ENCODE measurements at regions of chr2 and their contacts with region 1.

Region 1: DNA sequence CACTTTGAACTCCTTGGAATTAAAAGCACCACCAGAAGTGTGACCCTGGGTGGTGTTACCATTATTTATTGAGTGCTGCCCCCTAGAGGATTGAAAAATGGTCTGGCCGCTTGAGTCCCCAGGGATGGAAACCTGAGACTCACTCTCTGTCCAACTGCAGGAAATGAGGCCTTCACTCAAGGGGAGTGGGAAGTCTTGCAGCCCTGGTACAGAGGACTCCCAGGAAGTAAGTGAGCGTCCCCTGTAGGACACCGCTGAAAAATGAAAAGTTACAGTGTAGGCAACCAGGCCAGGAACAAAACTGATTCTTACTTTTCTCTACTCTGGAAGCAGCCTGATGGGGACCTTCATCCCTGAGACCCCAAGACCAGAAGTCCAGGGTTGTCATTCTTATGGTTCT is 2.2 kb upstream of the NRP2 start:
- DNase-seq: peak; percentile 79
- H3K4me3 ChIP-seq: no peak overlapping the region
- H3K27ac ChIP-seq: no peak overlapping the region
- H3K4me1 ChIP-seq: peaks cover 27% of the 10 kb centered on the region
- H3K27me3 ChIP-seq: no peaks in the 10 kb centered on the region
- CTCF ChIP-seq: peak; percentile 67 to 72
- POLR2A ChIP-seq: no peak

Region 2: GRCh38 chr2:204114295-204115145 is 1565.5 kb before region 1 on chr2:
- CTCF ChIA-PET with region 1: interaction called, 17 read pairs
- POLR2A ChIA-PET with region 1: interaction called, 11 read pairs
- dilution Hi-C with region 1: no loop called
- intact Hi-C with region 1: loop called (anchors 1 kb)
- DNase-seq: peak; percentile 99
- H3K4me3 ChIP-seq: peak overlapping the region in 1 of 3 experiments; percentile 11
- H3K27ac ChIP-seq: peak overlapping the region; percentile 86
- H3K4me1 ChIP-seq: peaks cover 77% of the 10 kb centered on the region
- H3K27me3 ChIP-seq: no peaks in the 10 kb centered on the region
- CTCF ChIP-seq: no peak
- POLR2A ChIP-seq: peak; percentile 73

Region 3: DNA sequence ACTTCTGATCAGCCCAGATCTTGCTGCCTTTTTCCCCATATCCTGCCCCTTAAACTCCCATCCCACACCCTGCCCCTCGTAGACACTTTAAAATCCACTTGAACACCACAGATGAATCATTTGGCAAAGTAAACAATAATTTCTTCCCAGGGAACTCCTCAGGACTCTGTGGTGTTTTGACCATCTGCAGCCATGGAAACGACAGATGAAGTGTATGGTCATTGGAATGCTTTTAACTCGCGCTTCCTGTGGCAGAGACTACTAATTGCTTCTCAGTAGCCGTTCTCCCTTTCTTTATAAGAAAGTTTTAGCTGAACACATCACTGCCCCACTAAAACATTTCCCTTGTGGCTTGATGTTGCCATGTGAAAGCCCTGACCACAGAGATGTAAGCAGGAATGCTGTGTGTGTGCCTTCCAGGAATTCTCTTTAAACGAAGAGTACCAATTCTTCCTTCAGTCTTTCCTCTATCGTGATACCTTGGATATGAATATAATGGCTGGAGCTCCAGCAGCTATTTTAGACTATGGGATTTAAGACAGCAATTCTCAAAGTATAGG is 1227.5 kb before region 1 on chr2:
- CTCF ChIA-PET with region 1: no interaction called
- POLR2A ChIA-PET with region 1: no interaction called
- dilution Hi-C with region 1: no loop called
- intact Hi-C with region 1: loop called (anchors 2 kb)
- DNase-seq: peak; percentile 99
- H3K4me3 ChIP-seq: no peak overlapping the region
- H3K27ac ChIP-seq: peak overlapping the region; percentile 92
- H3K4me1 ChIP-seq: peaks cover 24% of the 10 kb centered on the region
- H3K27me3 ChIP-seq: no peaks in the 10 kb centered on the region
- CTCF ChIP-seq: no peak
- POLR2A ChIP-seq: no peak

Region 4: DNA sequence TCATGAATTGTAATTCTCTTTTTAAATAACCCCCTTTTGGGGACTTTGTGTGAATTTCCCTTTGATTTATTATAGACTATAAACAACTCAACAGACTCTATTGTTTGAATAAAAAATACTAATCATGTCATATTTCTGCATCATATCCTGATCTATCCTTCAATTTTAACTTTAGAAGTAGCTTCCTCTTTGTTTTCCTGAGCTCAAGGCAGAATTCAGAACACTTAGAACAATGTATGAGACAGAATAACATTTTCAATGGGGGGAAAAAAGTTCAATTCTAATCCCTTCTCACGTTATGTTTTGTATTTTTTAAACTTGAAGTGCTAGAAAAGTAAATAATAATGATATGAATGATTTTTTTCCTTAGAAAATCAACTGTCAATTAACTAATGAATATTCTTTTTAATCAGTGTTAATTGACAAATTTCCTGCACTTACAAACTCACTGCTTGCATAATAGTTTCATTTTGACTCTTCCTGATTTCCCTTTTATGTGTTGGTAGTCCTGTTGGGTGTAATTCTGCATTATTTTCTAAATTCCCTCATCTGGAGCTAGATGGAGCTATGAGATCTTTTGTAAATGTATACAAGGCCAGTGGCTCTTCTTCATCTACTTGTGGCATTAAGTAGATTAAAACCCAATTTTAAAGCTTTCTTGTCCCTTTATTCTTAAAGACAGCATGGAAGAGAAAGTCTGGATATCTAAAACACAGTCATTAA is 808.7 kb before region 1 on chr2:
- CTCF ChIA-PET with region 1: interaction called, 62 read pairs
- POLR2A ChIA-PET with region 1: no interaction called
- dilution Hi-C with region 1: no loop called
- intact Hi-C with region 1: loop called (anchors 1 kb)
- DNase-seq: peak; percentile 87
- H3K4me3 ChIP-seq: no peak overlapping the region
- H3K27ac ChIP-seq: peak overlapping the region; percentile 42
- H3K4me1 ChIP-seq: peaks cover 14% of the 10 kb centered on the region
- H3K27me3 ChIP-seq: no peaks in the 10 kb centered on the region
- CTCF ChIP-seq: peak in 1 of 2 donors; percentile 20
- POLR2A ChIP-seq: no peak

Region 5: GRCh38 chr2:205405752-205406151 is 274.3 kb before region 1 on chr2:
- CTCF ChIA-PET with region 1: interaction called, 11 read pairs
- POLR2A ChIA-PET with region 1: interaction called, 3 read pairs
- dilution Hi-C with region 1: no loop called
- intact Hi-C with region 1: no loop called
- DNase-seq: peak; percentile 87
- H3K4me3 ChIP-seq: no peak overlapping the region
- H3K27ac ChIP-seq: peak overlapping the region; percentile 54
- H3K4me1 ChIP-seq: peaks cover 26% of the 10 kb centered on the region
- H3K27me3 ChIP-seq: no peaks in the 10 kb centered on the region
- CTCF ChIP-seq: no peak
- POLR2A ChIP-seq: no peak

Region 6: GRCh38 chr2:205766779-205767359 is 86.8 kb after region 1 on chr2:
- CTCF ChIA-PET with region 1: interaction called, 4 read pairs
- POLR2A ChIA-PET with region 1: interaction called, 3 read pairs
- dilution Hi-C with region 1: no loop called
- intact Hi-C with region 1: loop called (anchors 2 kb)
- DNase-seq: peak; percentile 66
- H3K4me3 ChIP-seq: no peak overlapping the region
- H3K27ac ChIP-seq: no peak overlapping the region
- H3K4me1 ChIP-seq: peaks cover 28% of the 10 kb centered on the region
- H3K27me3 ChIP-seq: no peaks in the 10 kb centered on the region
- CTCF ChIP-seq: peak; percentile 79 to 86
- POLR2A ChIP-seq: no peak

Region 7: GRCh38 chr2:206064077-206064476 is 384.0 kb after region 1 on chr2:
- CTCF ChIA-PET with region 1: no interaction called
- POLR2A ChIA-PET with region 1: no interaction called
- dilution Hi-C with region 1: no loop called
- intact Hi-C with region 1: no loop called
- DNase-seq: no peak
- H3K4me3 ChIP-seq: no peak overlapping the region
- H3K27ac ChIP-seq: no peak overlapping the region
- H3K4me1 ChIP-seq: no peaks in the 10 kb centered on the region
- H3K27me3 ChIP-seq: no peaks in the 10 kb centered on the region
- CTCF ChIP-seq: no peak
- POLR2A ChIP-seq: no peak

Region 8: DNA sequence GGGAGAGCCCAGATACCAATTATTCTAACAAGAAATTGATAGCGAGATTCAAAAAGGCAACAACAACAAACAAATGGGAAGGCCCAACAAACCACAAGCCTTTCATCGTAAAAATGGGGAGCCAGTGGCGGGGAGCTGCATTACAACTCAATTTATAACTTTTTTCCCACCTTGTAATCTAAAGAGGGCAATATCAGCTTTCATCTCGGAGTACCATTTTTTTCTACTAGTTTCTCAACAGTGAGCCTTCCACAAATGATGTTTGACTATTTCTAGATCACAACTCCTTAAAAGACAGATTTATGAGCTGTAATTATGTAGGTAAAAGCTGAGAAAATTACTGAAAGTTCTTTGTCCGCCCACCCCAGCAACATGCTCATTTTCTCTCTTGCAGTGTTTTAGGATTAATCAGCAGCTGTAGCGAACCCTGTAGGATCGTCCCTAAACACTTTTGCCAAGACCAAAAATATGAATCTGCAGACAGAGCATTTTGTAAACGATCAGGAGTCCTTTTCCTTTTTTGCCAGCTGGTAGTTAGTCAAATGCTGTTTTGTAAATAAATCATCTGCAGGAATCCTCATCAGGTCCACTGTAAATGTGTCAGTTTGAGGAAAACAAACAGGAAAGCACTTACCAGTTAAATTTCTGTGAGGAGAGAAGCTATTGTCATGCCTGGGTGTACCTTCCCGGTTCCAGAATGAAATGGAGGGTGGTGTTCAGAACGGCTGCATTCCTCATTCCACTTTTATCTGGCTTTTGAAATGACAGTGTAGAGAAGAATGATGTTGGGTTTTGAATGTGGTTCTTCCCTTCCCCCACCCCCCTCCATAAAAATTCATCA is 532.8 kb after region 1 on chr2:
- CTCF ChIA-PET with region 1: no interaction called
- POLR2A ChIA-PET with region 1: no interaction called
- dilution Hi-C with region 1: no loop called
- intact Hi-C with region 1: no loop called
- DNase-seq: peak; percentile 3
- H3K4me3 ChIP-seq: no peak overlapping the region
- H3K27ac ChIP-seq: no peak overlapping the region
- H3K4me1 ChIP-seq: no peaks in the 10 kb centered on the region
- H3K27me3 ChIP-seq: peaks cover 0 to 8% of the 10 kb centered on the region in 2 experiments
- CTCF ChIP-seq: no peak
- POLR2A ChIP-seq: no peak